ENCODE measurements at regions of chr7 and their contacts with region 1.

Region 1: GRCh38 chr7:99364961-99365817 is 9.3 kb upstream of the ARPC1B start:
- DNase-seq: peak; percentile 41 to 74
- ATAC-seq: peak; percentile 57 to 84 (median 75)
- H3K4me3 ChIP-seq: no peak overlapping the region
- H3K27ac ChIP-seq: no peak overlapping the region
- H3K4me1 ChIP-seq: no peaks in the 10 kb centered on the region
- H3K27me3 ChIP-seq: no peaks in the 10 kb centered on the region
- CTCF ChIP-seq: peak; percentile 43

Region 2: GRCh38 chr7:99325545-99326407 is 39.4 kb before region 1 on chr7 and contains the start of gene ARPC1A:
- intact Hi-C with region 1: loop called in 1 of 2 experiments (anchors 2 kb)
- DNase-seq: peak; percentile 92 to 96
- ATAC-seq: peak; percentile 95 to 97 (median 96)
- H3K4me3 ChIP-seq: peak within 1 kb of the TSS; percentile 94
- H3K27ac ChIP-seq: peak within 1 kb of the TSS; percentile 90
- H3K4me1 ChIP-seq: peaks cover 29% of the 10 kb centered on the region
- H3K27me3 ChIP-seq: no peaks in the 10 kb centered on the region
- CTCF ChIP-seq: peak; percentile 23
- total RNA-seq, gene ARPC1A: 41.6 to 53.5 (median 47.6) TPM

Region 3: GRCh38 chr7:99422186-99422585 is 57.0 kb after region 1 on chr7:
- intact Hi-C with region 1: loop called in 1 of 2 experiments (anchors 5 kb)
- DNase-seq: no peak
- ATAC-seq: no peak
- H3K4me3 ChIP-seq: no peak overlapping the region
- H3K27ac ChIP-seq: no peak overlapping the region
- H3K4me1 ChIP-seq: no peaks in the 10 kb centered on the region
- H3K27me3 ChIP-seq: no peaks in the 10 kb centered on the region
- CTCF ChIP-seq: no peak